ENCODE measurements at regions of chrX and their contacts with region 1.

Region 1: DNA sequence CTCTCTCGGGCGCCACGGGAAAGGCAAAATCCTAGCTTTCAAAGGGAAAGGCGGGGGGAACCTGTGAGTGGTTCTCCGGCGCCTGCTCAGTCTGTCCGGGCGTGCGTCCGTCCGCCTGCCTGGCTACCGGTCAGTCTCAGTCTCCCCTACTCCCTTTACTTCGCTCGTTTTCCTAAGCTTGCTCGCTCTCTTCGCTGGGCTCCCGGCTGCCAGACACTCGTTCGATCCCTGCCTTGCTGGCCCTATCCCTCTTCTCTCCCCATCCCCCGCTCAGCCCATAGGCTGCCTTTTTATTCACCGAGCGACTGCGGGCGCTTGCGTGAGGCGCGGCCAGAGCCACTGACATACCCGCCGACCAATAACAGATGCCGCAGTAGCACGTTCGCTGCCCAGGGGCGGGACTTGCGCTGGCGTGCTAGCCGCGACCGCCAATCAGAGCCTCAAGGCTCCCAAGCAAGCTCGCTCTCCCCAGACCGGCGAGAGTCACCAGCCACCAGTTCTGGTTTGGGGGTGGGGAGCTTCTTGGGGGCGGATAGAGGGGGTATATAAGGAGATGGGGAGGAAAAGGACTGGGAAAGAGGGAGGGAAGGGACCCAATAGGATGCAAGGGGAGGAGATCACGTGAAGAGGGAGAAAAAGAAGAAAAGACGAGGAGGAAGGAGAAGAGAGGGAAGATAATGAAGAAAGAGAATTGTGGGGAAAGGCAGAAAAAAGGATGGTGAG is 30.0 kb downstream of the ARHGEF9 start:
- DNase-seq: peak; percentile 68 to 93 (median 84)
- ATAC-seq: peak; percentile 94
- H3K4me3 ChIP-seq: peak overlapping the region; percentile 91 to 94
- H3K4me3 Mint-ChIP-seq: peak overlapping the region; percentile 99
- H3K27ac ChIP-seq: peak overlapping the region; percentile 89 to 92
- H3K27ac Mint-ChIP-seq: peak overlapping the region; percentile 98
- H3K4me1 ChIP-seq: peaks cover 21% of the 10 kb centered on the region
- H3K4me1 Mint-ChIP-seq: peaks cover 35% of the 10 kb centered on the region
- H3K27me3 ChIP-seq: no peaks in the 10 kb centered on the region
- H3K27me3 Mint-ChIP-seq: peaks cover under 1% of the 10 kb centered on the region
- CTCF ChIP-seq: no peak

Region 2: DNA sequence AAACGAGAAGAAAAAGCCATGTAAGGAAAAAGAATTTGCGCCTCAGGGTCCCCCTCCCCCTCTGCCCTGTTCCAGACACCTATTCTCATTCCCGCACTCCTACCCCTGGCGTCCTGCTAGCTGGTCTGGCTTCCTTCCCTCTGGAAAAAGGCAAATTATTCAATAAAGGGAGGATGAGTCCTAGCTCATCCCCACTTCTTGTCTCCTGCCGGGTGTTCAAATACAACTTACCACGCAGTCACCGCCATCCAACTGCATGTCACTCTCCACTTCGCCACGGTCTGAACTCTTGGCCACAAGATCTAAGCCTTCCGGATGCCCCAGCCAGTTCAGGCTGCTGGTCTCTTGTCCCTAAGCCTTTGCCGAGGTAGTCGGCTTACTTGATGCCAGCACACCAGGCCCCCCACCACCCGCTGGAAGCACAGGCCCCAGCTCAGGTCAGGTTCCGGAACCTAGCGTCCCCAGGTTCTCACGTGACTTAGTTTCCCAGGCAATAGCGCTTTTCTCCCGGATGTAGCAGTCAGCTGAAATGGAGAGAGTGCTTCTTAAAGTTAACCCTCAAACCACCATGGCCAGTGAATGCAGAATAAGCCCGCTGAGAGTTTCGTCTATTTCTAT is 194.3 kb before region 1 on chrX:
- CTCF ChIA-PET with region 1: no interaction called
- POLR2A ChIA-PET with region 1: no interaction called
- intact Hi-C with region 1: loop called (anchors 2 to 5 kb)
- DNase-seq: peak; percentile 3 to 78 (median 53)
- ATAC-seq: peak; percentile 86
- H3K4me3 ChIP-seq: peak overlapping the region; percentile 71 to 93
- H3K4me3 Mint-ChIP-seq: peak overlapping the region; percentile 93
- H3K27ac ChIP-seq: peak overlapping the region; percentile 69 to 76
- H3K27ac Mint-ChIP-seq: peak overlapping the region; percentile 93
- H3K4me1 ChIP-seq: peaks cover 14% of the 10 kb centered on the region
- H3K4me1 Mint-ChIP-seq: peaks cover 37% of the 10 kb centered on the region
- H3K27me3 ChIP-seq: no peaks in the 10 kb centered on the region
- H3K27me3 Mint-ChIP-seq: no peaks in the 10 kb centered on the region
- CTCF ChIP-seq: no peak

Region 3: DNA sequence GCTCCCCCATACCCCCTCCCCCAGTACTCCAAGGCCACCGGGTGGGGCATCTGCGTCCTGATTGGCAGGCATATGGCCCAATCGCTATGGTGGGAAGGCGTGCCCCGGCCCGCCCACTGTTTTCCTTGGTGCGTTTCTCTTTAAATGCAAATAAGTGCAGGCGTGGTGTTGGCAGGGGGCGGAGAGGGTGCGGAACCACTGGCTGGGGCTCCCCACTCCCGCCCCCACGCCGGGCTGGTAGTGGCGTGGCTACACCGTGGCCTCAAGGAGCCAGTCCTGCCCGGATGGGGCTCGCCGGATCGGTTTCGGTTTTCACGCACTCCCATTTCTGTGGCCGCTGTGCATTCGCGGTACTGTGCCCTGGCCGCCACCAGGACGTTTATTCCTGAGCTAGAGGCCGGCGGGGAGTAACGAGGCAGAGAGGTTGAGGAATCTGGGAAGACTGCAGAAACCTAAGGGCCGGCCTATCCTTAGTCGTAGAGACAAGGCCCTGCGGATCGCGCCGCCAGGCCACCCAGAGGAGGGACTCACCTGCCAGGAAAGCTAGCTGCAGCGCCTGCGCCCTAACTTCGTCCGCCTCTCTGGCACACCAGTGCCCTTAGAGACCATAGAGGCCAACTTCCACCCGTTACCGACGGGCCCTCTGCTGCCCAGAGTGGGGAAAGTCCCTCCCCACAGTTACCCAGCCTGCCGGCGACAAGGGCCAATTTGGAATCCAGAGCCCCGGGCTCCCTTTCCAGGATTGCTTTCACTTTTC is 450.9 kb after region 1 on chrX:
- CTCF ChIA-PET with region 1: no interaction called
- POLR2A ChIA-PET with region 1: interaction called, 10 read pairs
- intact Hi-C with region 1: loop called (anchors 1 to 5 kb)
- DNase-seq: peak; percentile 67 to 92 (median 86)
- ATAC-seq: peak; percentile 88
- H3K4me3 ChIP-seq: peak overlapping the region; percentile 57 to 82
- H3K4me3 Mint-ChIP-seq: peak overlapping the region; percentile 92
- H3K27ac ChIP-seq: peak overlapping the region; percentile 77 to 90
- H3K27ac Mint-ChIP-seq: peak overlapping the region; percentile 93
- H3K4me1 ChIP-seq: peaks cover 11% of the 10 kb centered on the region
- H3K4me1 Mint-ChIP-seq: peaks cover 23% of the 10 kb centered on the region
- H3K27me3 ChIP-seq: no peaks in the 10 kb centered on the region
- H3K27me3 Mint-ChIP-seq: no peaks in the 10 kb centered on the region
- CTCF ChIP-seq: no peak

Region 4: GRCh38 chrX:64975989-64976672 is 1221.1 kb after region 1 on chrX and contains the start of gene ZC4H2:
- CTCF ChIA-PET with region 1: no interaction called
- POLR2A ChIA-PET with region 1: no interaction called
- intact Hi-C with region 1: loop called (anchors 10 kb)
- DNase-seq: peak; percentile 31 to 81 (median 65)
- ATAC-seq: peak; percentile 95
- H3K4me3 ChIP-seq: peak within 1 kb of the TSS; percentile 60 to 81
- H3K4me3 Mint-ChIP-seq: peak within 1 kb of the TSS; percentile 95
- H3K27ac ChIP-seq: peak within 1 kb of the TSS; percentile 31 to 37
- H3K27ac Mint-ChIP-seq: peak within 1 kb of the TSS; percentile 91
- H3K4me1 ChIP-seq: peaks cover 10% of the 10 kb centered on the region
- H3K4me1 Mint-ChIP-seq: peaks cover 33% of the 10 kb centered on the region
- H3K27me3 ChIP-seq: no peaks in the 10 kb centered on the region
- H3K27me3 Mint-ChIP-seq: no peaks in the 10 kb centered on the region
- CTCF ChIP-seq: no peak
- total RNA-seq, gene ZC4H2: 3.2 to 6.5 TPM

Region 5: DNA sequence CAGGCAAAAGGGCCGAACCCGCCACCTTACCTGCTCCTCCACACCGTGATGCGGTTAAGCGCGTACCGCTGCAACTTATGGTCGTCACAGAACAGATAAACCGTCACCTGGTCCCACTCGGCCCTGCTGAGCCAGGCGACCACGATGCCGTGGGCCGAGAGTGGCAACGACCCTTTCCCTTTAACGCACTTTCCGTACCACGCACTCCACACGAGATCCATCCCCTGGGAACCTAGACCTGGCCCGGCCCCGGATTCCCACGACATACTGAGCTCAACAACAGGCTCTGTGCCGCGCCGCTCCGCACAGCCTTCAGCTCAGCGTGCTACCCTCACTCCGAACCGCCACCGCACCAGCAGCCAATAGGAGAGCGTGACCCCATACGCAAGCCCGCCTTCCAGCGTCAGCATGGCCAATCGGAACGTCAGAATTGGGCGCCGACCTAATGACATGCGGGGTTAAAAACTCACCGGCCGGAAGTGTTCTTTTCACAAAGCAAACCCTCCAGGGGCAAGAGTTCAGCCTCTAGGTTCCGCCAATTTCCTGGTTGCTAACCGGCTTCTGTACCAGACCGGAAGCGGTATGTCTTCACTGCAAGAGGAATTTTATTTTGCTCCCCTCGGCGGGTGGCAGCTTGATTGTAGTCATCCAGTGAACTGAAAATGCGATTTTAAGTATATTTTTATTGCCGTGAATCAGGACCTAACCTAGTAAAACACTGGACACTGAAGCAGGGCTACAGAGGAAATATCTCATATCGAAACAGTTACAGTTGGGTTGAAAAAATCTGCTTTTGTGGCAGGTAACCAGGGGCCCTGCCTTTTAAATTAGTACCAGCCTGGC is 1779.7 kb after region 1 on chrX and contains the start of gene LAS1L:
- CTCF ChIA-PET with region 1: no interaction called
- POLR2A ChIA-PET with region 1: no interaction called
- intact Hi-C with region 1: loop called (anchors 2 to 5 kb)
- DNase-seq: peak; percentile 77 to 95 (median 87)
- ATAC-seq: peak; percentile 99
- H3K4me3 ChIP-seq: peak within 1 kb of the TSS; percentile 61 to 84
- H3K4me3 Mint-ChIP-seq: peak within 1 kb of the TSS; percentile 100
- H3K27ac ChIP-seq: peak within 1 kb of the TSS; percentile 71 to 77
- H3K27ac Mint-ChIP-seq: peak within 1 kb of the TSS; percentile 98
- H3K4me1 ChIP-seq: peaks cover 15% of the 10 kb centered on the region
- H3K4me1 Mint-ChIP-seq: peaks cover 22% of the 10 kb centered on the region
- H3K27me3 ChIP-seq: no peaks in the 10 kb centered on the region
- H3K27me3 Mint-ChIP-seq: no peaks in the 10 kb centered on the region
- CTCF ChIP-seq: no peak
- total RNA-seq, gene LAS1L: 52.7 to 55.3 TPM

Measured in CD8-positive, alpha-beta T cell (primary cell).